ENCODE measurements at regions of chr10 and their contacts with region 1.

Region 1: DNA sequence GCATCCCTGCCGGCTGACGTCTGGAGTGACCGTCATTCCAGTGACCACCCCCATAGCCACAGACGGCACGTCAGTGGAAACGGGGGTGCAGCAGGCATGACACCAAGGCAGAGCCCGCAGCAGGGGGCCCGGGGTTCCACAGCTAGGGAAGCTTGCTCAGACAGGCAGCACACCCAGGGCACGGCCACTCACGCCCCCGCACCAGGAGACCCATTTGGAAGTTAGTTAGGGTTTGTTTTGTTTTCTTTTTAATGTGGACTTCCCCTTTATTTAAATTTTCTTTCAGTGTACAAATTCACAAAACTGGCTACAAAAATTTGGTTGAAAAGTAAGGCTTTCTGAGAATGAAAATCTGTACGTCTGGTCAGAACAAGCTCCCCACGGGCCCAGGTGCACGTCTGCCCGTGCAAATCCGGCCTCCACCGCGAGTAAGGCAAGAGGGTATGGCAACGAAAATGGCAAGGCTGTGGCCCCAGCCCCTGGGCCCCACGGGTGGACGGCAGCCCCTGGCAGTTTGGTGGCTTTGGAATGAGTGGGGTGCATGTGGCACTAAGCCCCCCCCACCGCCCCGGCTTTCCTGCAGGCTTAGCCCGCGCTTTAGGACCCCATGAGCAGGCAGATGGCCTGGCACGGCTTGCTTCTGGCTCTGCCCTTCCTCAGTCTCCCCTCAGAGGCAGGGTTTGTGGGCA is 124.2 kb downstream of the FAM53B start:
- DNase-seq: no peak
- ATAC-seq: no peak

Region 2: GRCh38 chr10:124565565-124566256 is 54.2 kb before region 1 on chr10:
- intact Hi-C with region 1: loop called in 1 of 2 experiments (anchors 5 kb)
- DNase-seq: peak; percentile 30
- ATAC-seq: peak; percentile 28 to 55

Region 3: DNA sequence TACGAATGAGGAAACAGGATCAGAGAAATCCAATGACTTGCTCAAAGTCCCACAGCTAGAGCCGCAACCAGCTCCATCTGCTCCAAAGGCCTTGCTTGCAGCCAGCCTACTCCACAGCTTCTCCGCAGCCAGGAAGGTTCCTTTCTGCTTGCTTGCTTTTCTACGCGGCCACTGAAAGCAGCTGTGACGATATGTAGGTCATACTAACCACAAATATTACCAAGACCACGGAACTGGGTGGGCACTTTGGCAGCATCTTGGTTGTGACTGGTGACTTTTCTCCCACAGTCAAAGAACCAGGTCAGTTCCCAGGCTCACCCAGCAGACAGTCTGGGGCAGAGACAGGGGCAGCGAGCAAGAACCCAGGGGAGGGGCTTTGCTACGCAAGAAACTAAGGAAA is 37.9 kb after region 1 on chr10:
- intact Hi-C with region 1: no loop called
- DNase-seq: no peak
- ATAC-seq: peak; percentile 19 to 25

Region 4: DNA sequence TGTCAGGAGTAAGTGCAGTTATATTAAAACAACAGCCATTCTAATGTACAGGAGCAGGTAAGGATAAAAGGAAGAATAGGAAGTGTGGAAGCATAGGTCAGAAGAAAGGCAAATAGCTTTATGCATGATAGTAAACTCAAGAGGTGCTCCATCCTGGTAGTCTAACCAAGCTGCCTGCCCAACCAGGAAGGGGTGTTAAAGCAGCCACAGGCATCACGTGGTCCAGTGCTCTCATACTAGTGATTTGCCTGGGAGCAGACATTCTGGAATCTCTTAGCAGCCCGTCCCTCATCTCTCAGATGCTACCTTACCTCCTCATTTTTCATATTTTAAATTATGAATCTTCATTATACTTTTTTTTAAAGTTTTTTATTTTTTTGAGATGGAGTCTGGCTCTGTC is 200.2 kb after region 1 on chr10:
- intact Hi-C with region 1: no loop called
- DNase-seq: no peak
- ATAC-seq: no peak